Activated naive CD4-positive, alpha-beta T cell treated with anti-CD3 and anti-CD28 coated beads for 36 hours (primary cell): ENCODE measurements at regions of chr15 and their contacts with region 1.

Region 1: DNA sequence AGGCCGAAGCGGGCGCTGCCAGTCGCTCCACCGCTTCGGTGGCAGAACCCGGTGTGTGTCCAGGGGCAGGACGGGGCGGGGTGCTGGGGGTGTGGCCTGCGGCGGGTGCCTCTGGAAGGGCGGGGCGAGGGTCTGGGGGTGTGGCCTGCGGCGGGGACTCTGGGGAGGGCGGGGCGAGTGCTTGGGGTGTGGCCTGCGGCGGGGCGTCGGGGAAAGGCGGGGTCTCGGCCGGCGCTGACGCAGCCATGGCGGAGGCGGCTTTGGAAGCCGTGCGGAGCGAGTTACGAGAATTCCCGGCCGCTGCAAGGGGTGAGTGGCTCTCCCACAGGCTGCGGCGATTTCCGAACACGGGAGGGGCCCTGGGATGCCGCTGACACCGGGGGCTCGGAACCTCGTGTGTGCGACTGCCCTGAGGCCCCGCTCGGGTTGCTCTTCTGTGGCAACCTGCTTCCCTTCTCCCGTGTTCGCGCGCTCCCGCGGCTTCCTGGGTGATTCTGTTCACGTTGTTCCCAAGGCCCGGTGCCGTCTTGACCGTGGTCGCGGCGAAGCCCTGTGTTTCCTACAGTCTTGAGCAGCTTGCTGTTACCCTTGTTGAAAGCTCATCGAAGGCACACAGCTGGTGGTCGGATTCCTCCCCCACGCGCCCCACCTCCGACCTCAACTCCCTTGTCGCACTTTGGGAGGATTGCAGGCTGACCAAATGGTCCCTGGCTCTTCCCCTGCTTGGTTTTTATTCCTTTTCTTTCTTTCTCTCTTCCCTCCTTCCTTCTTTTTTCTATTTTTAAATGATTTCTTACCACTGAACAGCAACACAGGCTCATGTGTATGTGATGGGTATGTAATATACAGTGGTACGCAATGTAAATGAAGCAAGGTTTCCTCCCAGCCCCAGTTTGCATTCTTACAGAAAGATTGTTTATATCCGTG is at the start of gene JMJD7:
- DNase-seq: peak; percentile 97
- H3K4me3 Mint-ChIP-seq: peak within 1 kb of the TSS; percentile 82
- H3K27ac Mint-ChIP-seq: peak within 1 kb of the TSS; percentile 59
- H3K4me1 Mint-ChIP-seq: peaks cover 42% of the 10 kb centered on the region
- H3K27me3 Mint-ChIP-seq: no peaks in the 10 kb centered on the region
- total RNA-seq, gene JMJD7: 18.7 to 19.8 TPM

Region 2: GRCh38 chr15:41695750-41696426 is 132.3 kb before region 1 on chr15:
- CTCF ChIA-PET with region 1: no interaction called
- intact Hi-C with region 1: loop called (anchors 1 kb)
- DNase-seq: peak; percentile 78
- H3K4me3 Mint-ChIP-seq: peak overlapping the region; percentile 22
- H3K27ac Mint-ChIP-seq: peak overlapping the region; percentile 76
- H3K4me1 Mint-ChIP-seq: peaks cover 48% of the 10 kb centered on the region
- H3K27me3 Mint-ChIP-seq: no peaks in the 10 kb centered on the region

Region 3: GRCh38 chr15:41746802-41747201 is 81.3 kb before region 1 on chr15:
- CTCF ChIA-PET with region 1: no interaction called
- intact Hi-C with region 1: no loop called
- DNase-seq: no peak
- H3K4me3 Mint-ChIP-seq: no peak overlapping the region
- H3K27ac Mint-ChIP-seq: no peak overlapping the region
- H3K4me1 Mint-ChIP-seq: no peaks in the 10 kb centered on the region
- H3K27me3 Mint-ChIP-seq: no peaks in the 10 kb centered on the region

Region 4: GRCh38 chr15:41894791-41895463 is 66.8 kb after region 1 on chr15:
- CTCF ChIA-PET with region 1: no interaction called
- intact Hi-C with region 1: loop called (anchors 2 kb)
- DNase-seq: peak; percentile 85
- H3K4me3 Mint-ChIP-seq: peak overlapping the region; percentile 9
- H3K27ac Mint-ChIP-seq: peak overlapping the region; percentile 71
- H3K4me1 Mint-ChIP-seq: peaks cover 37% of the 10 kb centered on the region
- H3K27me3 Mint-ChIP-seq: no peaks in the 10 kb centered on the region

Region 5: GRCh38 chr15:42604894-42605744 is 777.0 kb after region 1 on chr15:
- CTCF ChIA-PET with region 1: no interaction called
- intact Hi-C with region 1: no loop called
- DNase-seq: peak; percentile 11
- H3K4me3 Mint-ChIP-seq: no peak overlapping the region
- H3K27ac Mint-ChIP-seq: peak overlapping the region; percentile 46
- H3K4me1 Mint-ChIP-seq: peaks cover 42% of the 10 kb centered on the region
- H3K27me3 Mint-ChIP-seq: no peaks in the 10 kb centered on the region